Dendritic cell treated with granulocyte-macrophage colony-stimulating factor and Interleukin-4, amounts not matched to agents 40 ng/mL and 50 ng/mL, for 4 days (primary cell): ENCODE measurements at regions of chr10 and their contacts with region 1.

Region 1: DNA sequence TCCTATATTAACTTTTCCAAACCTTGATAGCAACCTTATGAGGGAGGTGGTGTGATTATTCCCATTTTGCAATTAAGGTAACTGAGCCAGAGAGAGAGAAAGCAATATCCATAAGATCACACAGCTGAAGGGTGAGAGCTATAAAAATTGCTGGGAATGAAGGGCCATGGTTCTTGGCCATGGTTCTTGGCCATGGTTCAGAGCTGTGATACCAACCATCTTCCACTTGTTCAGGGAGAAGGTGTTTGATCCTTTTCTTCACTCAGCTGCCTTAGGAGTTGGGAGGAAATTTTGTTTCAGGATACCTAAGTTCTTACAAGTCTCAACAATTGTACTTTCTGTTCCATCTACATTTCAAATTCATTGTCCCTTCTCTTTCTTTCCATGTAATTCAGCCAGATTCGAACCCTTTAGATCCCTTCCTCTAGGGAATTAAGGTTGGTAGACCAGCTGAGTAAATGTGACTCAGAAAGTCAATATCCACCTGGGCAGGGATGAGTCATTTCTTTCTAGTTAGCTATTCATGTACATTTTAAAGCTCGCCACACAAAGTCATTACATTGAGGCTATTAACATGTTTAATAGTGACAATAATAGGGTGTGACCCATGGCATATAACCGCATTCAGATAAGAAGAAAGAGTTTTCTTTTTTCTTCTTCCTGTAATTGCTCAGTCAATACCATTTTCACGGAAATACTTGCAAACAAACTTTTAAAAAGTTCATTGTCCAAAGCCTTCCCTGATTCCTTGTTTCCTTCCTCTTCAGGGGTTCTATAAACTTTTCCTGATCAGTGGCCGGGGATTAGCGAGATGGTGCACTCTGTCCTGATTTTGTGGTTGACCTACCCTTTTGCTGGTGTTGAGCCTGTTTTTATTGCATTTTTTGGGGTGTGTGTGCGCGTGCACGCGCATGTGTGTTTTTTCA is 143.4 kb downstream of the TCF7L2 start:
- H3K4me3 Mint-ChIP-seq: no peak overlapping the region
- H3K27ac Mint-ChIP-seq: no peak overlapping the region
- H3K4me1 Mint-ChIP-seq: peaks cover 49% of the 10 kb centered on the region
- H3K27me3 Mint-ChIP-seq: peaks cover 89% of the 10 kb centered on the region

Region 2: DNA sequence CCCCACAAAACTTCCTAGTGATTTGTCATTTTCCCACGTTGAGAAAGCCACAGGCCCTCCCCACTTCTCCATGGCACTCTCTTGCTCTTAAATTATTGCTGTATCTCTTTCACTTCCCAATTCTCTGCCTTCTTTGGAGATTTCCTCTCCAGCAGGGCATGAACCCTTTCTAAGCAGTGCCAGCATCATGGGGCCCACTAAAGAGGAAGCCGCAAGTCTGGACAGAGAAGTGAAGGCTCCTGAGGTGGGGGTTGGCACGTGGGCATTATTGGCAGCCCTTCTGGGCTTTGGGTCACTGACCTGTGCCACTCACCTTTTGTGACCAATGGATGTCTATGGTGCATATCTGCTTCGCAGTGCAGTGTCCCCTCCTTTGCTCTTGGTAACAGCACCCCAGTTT is 241.1 kb before region 1 on chr10:
- intact Hi-C with region 1: loop called (anchors 5 kb)
- H3K4me3 Mint-ChIP-seq: no peak overlapping the region
- H3K27ac Mint-ChIP-seq: peak overlapping the region; percentile 9
- H3K4me1 Mint-ChIP-seq: peaks cover 49% of the 10 kb centered on the region
- H3K27me3 Mint-ChIP-seq: peaks cover 89% of the 10 kb centered on the region

Region 3: GRCh38 chr10:112949875-112950507 is 143.5 kb before region 1 on chr10 and contains the start of gene TCF7L2:
- intact Hi-C with region 1: loop called (anchors 10 kb)
- H3K4me3 Mint-ChIP-seq: peak within 1 kb of the TSS; percentile 87
- H3K27ac Mint-ChIP-seq: peak within 1 kb of the TSS; percentile 92
- H3K4me1 Mint-ChIP-seq: peaks cover 61% of the 10 kb centered on the region
- H3K27me3 Mint-ChIP-seq: peaks cover 57% of the 10 kb centered on the region

Region 4: GRCh38 chr10:113108212-113108835 is 14.9 kb after region 1 on chr10:
- intact Hi-C with region 1: no loop called
- H3K4me3 Mint-ChIP-seq: no peak overlapping the region
- H3K27ac Mint-ChIP-seq: no peak overlapping the region
- H3K4me1 Mint-ChIP-seq: no peaks in the 10 kb centered on the region
- H3K27me3 Mint-ChIP-seq: peaks cover 66% of the 10 kb centered on the region

Region 5: GRCh38 chr10:113326160-113327111 is 233.0 kb after region 1 on chr10:
- intact Hi-C with region 1: loop called (anchors 10 kb)
- H3K4me3 Mint-ChIP-seq: no peak overlapping the region
- H3K27ac Mint-ChIP-seq: no peak overlapping the region
- H3K4me1 Mint-ChIP-seq: peaks cover 53% of the 10 kb centered on the region
- H3K27me3 Mint-ChIP-seq: peaks cover 67% of the 10 kb centered on the region

Region 6: GRCh38 chr10:113801569-113801968 is 708.1 kb after region 1 on chr10:
- intact Hi-C with region 1: no loop called
- H3K4me3 Mint-ChIP-seq: no peak overlapping the region
- H3K27ac Mint-ChIP-seq: no peak overlapping the region
- H3K4me1 Mint-ChIP-seq: peaks cover 7% of the 10 kb centered on the region
- H3K27me3 Mint-ChIP-seq: peaks cover 8% of the 10 kb centered on the region

Region 7: GRCh38 chr10:114024876-114025610 is 931.6 kb after region 1 on chr10:
- intact Hi-C with region 1: loop called (anchors 10 kb)
- H3K4me3 Mint-ChIP-seq: peak overlapping the region; percentile 39
- H3K27ac Mint-ChIP-seq: peak overlapping the region; percentile 37
- H3K4me1 Mint-ChIP-seq: peaks cover 68% of the 10 kb centered on the region
- H3K27me3 Mint-ChIP-seq: peaks cover 66% of the 10 kb centered on the region